ENCODE measurements at regions of chr6 and their contacts with region 1.

Region 1: GRCh38 chr6:151269321-151269995 is 29.7 kb downstream of the AKAP12 start:
- DNase-seq: no peak
- ATAC-seq: no peak

Region 2: DNA sequence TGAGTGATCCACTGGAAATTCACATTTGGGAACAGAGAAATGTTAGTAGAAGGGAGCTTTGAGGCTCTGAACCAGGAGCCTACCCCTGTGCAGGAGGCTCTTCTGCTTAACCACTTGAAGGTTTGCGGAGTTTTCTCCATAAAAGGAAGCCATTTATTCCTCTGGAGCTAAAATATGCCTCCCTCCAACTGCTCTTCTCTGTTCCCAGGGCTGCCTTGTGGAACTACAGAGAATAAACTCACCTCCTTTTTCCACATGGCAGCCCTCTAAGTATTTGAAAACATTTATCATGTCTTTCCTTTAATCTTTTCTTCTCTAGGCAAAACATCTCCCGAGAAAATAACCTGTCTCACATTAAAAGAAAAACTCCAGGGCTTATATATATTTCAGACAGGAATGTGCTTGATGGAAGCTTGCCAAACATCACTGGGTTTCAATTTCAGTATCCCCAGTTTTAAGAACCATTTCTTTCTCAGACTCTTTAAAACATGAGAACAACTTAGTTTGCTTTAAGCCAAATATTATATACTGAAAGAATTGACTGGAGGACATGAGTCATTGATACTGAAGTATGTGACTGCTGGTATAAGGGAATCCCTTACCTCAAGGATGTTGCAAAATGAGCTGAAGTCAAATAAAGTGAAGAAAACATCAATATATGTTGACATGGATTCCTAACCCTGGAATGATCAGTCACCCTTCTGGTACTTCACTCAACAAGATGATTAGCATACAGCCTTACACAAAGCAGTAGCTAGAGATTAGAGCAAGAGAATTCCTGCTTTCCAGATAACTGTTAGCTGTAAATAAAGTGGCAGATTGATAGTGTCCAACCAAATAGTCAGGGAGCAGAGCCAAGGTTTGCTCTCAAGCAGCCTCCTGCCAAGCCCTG is 47.9 kb after region 1 on chr6:
- intact Hi-C with region 1: loop called in 1 of 2 experiments (anchors 10 kb)
- DNase-seq: no peak
- ATAC-seq: peak in 1 of 2 donors; percentile 26

Region 3: GRCh38 chr6:151974061-151974617 is 704.7 kb after region 1 on chr6:
- intact Hi-C with region 1: no loop called
- DNase-seq: no peak
- ATAC-seq: no peak